Dorsolateral prefrontal cortex (tissue), 120 donors: ENCODE measurements at regions of chr5 and their contacts with region 1.

Region 1: DNA sequence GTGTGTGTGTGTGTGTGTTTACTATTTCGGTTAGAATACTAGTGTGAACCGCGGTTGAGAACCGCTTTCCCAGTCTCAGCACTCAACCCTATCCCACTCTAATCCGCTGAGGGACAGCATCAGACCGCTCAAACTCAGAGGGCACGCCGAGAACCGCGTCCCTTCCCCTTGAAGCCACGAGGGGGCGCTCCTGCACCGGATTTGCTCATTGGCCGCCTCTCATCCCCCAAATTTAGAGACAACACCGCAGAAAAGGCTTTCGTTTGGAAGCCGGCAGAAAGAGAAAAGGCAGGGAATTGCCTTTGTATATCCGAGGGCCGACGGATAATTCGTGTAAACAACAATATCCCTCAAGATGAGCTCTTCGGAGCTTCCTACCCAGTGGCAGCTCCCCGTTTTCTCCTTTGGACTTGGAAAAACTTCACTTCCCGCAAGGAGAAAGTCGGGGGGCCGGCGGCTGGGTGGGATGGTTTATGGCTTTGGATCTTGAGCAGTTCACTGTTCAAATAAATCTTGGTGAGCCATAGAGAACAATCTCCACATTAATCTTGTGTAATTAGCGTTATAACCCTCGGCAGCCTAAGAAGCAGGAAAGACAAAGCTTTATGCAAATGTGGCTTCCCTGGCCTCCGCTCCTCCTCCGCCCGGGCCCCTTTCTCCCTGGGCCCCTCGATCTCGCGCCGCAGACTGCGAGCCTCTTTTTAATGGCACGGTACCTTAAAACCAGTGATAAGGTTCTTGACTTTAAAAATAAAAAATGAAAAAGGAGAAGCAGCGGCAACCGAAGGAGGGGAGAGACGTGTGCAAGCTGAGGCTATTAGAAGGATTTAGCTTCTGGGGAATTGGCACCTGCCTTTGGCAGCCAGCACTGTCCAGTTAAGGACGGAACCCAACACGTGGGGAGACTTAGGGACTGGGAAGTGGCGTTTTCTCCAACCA is 296.8 kb downstream of the PARP8 start:
- DNase-seq: peak; percentile 49 to 87 (median 69)
- H3K4me3 ChIP-seq: peak overlapping the region; percentile 14 to 74 (median 52)
- H3K27ac ChIP-seq: no peak overlapping the region
- H3K27me3 ChIP-seq: peaks cover 17 to 87% (median 65%) of the 10 kb centered on the region in 45 donors
- CTCF ChIP-seq: peak; percentile 29 to 93 (median 85)

Region 2: GRCh38 chr5:50905996-50906570 is 57.1 kb before region 1 on chr5:
- intact Hi-C with region 1: no loop called
- DNase-seq: no peak
- H3K4me3 ChIP-seq: no peak overlapping the region
- H3K27ac ChIP-seq: no peak overlapping the region
- H3K27me3 ChIP-seq: peaks cover 0 to 7% (median 0%) of the 10 kb centered on the region in 45 donors
- CTCF ChIP-seq: no peak

Region 3: GRCh38 chr5:51382763-51383490 is 419.7 kb after region 1 on chr5 and contains the start of gene ISL1:
- intact Hi-C with region 1: loop called (anchors 10 kb)
- DNase-seq: peak in 2 of 10 donors; percentile 12 to 53
- H3K4me3 ChIP-seq: peak within 1 kb of the TSS in 54 of 59 donors; percentile 4 to 61 (median 38)
- H3K27ac ChIP-seq: no peak within 1 kb of the TSS
- H3K27me3 ChIP-seq: peaks cover 35 to 100% (median 100%) of the 10 kb centered on the region in 45 donors
- CTCF ChIP-seq: no peak
- total RNA-seq, gene ISL1: not detected

Region 4: GRCh38 chr5:52007230-52007858 is 1044.1 kb after region 1 on chr5:
- intact Hi-C with region 1: loop called in 1 of 2 experiments (anchors 5 kb)
- DNase-seq: peak in 1 of 10 donors; percentile 12
- H3K4me3 ChIP-seq: no peak overlapping the region
- H3K27ac ChIP-seq: no peak overlapping the region
- H3K27me3 ChIP-seq: peaks cover 0 to 8% (median 0%) of the 10 kb centered on the region in 45 donors
- CTCF ChIP-seq: peak; percentile 16 to 78 (median 60)

Region 5: DNA sequence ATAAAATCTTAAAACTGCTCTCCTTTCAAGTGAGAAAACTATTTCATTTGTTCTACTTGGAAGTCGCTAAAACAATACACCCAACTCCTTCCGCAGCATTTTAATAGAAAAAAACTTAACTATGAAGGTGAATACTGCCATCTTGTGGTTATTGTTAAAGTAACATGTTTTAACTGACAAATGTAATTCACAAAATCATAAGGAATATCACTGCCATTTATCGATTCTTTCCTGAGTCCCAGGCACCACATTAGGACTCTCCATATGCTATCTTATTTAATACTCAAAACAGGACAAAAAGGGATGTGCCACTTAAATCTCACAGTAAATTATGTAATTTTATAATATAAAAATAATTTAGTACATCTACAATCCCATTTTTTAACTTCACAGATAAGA is 1694.0 kb after region 1 on chr5:
- intact Hi-C with region 1: loop called (anchors 5 kb)
- DNase-seq: no peak
- H3K4me3 ChIP-seq: peak overlapping the region in 2 of 59 donors; percentile 2 to 4
- H3K27ac ChIP-seq: no peak overlapping the region
- H3K27me3 ChIP-seq: peaks cover 0 to 32% (median 7%) of the 10 kb centered on the region in 45 donors
- CTCF ChIP-seq: peak; percentile 34 to 92 (median 74)